CD8-positive, alpha-beta memory T cell (primary cell): ENCODE measurements at regions of chr9 and their contacts with region 1.

Region 1: GRCh38 chr9:125297917-125298316 is 36.3 kb downstream of the GAPVD1 start:
- DNase-seq: peak in 1 of 5 donors; percentile 2
- H3K4me3 ChIP-seq: no peak overlapping the region
- H3K4me3 Mint-ChIP-seq: no peak overlapping the region
- H3K27ac ChIP-seq: no peak overlapping the region
- H3K27ac Mint-ChIP-seq: peak overlapping the region in 3 of 8 donors; percentile 11 to 81 (median 12)
- H3K4me1 ChIP-seq: peaks cover 4% of the 10 kb centered on the region
- H3K4me1 Mint-ChIP-seq: peaks cover 8 to 22% (median 12%) of the 10 kb centered on the region in 3 donors
- H3K27me3 ChIP-seq: no peaks in the 10 kb centered on the region
- H3K27me3 Mint-ChIP-seq: no peaks in the 10 kb centered on the region

Region 2: GRCh38 chr9:124098141-124099090 is 1199.5 kb before region 1 on chr9:
- CTCF ChIA-PET with region 1: no interaction called
- POLR2A ChIA-PET with region 1: no interaction called
- DNase-seq: no peak
- H3K4me3 ChIP-seq: no peak overlapping the region
- H3K4me3 Mint-ChIP-seq: no peak overlapping the region
- H3K27ac ChIP-seq: no peak overlapping the region
- H3K27ac Mint-ChIP-seq: peak overlapping the region in 1 of 8 donors; percentile 46
- H3K4me1 ChIP-seq: no peaks in the 10 kb centered on the region
- H3K4me1 Mint-ChIP-seq: no peaks in the 10 kb centered on the region
- H3K27me3 ChIP-seq: no peaks in the 10 kb centered on the region
- H3K27me3 Mint-ChIP-seq: peaks cover 13 to 25% of the 10 kb centered on the region in 2 donors

Region 3: DNA sequence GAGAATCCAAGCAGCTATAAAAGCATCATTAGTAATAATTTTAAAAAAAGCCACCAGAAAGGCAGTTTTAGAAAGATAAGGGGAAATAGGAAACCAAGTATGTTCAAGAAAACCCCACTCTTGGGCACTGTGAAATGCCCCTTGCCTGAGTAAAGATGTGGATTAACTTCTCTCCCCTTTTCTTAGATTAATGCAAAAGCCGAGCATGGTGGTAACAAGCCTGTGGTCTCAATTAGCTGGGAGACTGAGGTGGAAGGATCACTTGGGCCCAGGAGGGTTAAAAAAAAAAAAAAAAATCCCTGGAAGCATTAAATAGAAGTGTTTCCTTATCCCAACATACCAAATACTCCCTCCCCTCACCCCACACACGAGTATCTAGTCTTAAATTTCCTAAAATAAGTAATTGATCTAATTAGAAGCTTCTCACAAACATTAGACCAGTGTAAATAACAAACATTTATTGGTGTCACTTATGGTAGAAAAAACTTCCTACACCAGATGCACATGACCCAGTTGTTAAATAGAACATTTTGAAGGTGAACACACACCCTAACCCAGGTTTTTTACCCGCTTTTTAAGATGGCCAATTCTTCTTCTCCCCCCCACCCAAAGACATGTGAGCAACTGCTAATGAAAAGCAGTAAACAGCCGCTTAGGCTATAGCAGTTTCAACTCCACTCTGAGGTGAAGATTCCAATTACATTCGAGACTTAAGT is 62.0 kb before region 1 on chr9:
- CTCF ChIA-PET with region 1: no interaction called
- POLR2A ChIA-PET with region 1: interaction called, 12 read pairs
- DNase-seq: peak in 1 of 5 donors; percentile 17
- H3K4me3 ChIP-seq: peak overlapping the region; percentile 0
- H3K4me3 Mint-ChIP-seq: peak overlapping the region in 6 of 7 donors; percentile 13 to 94 (median 60)
- H3K27ac ChIP-seq: no peak overlapping the region
- H3K27ac Mint-ChIP-seq: peak overlapping the region; percentile 61 to 84 (median 69)
- H3K4me1 ChIP-seq: peaks cover 51% of the 10 kb centered on the region
- H3K4me1 Mint-ChIP-seq: peaks cover 46 to 59% (median 51%) of the 10 kb centered on the region in 3 donors
- H3K27me3 ChIP-seq: no peaks in the 10 kb centered on the region
- H3K27me3 Mint-ChIP-seq: peaks cover 0 to 6% of the 10 kb centered on the region in 2 donors